ENCODE measurements at regions of chr3 and their contacts with region 1.

Region 1: GRCh38 chr3:122484985-122485384 is 29.8 kb downstream of the KPNA1 start:
- DNase-seq: peak; percentile 43 to 46
- H3K4me3 ChIP-seq: no peak overlapping the region
- H3K27ac ChIP-seq: peak overlapping the region; percentile 37
- H3K4me1 ChIP-seq: peaks cover 25% of the 10 kb centered on the region
- H3K27me3 ChIP-seq: no peaks in the 10 kb centered on the region
- CTCF ChIP-seq: no peak

Region 2: GRCh38 chr3:122497425-122497824 is 12.4 kb after region 1 on chr3:
- CTCF ChIA-PET with region 1: no interaction called
- POLR2A ChIA-PET with region 1: no interaction called
- intact Hi-C with region 1: loop called (anchors 1 kb)
- DNase-seq: peak; percentile 25 to 79
- H3K4me3 ChIP-seq: no peak overlapping the region
- H3K27ac ChIP-seq: peak overlapping the region; percentile 75
- H3K4me1 ChIP-seq: peaks cover 25% of the 10 kb centered on the region
- H3K27me3 ChIP-seq: no peaks in the 10 kb centered on the region
- CTCF ChIP-seq: no peak

Region 3: DNA sequence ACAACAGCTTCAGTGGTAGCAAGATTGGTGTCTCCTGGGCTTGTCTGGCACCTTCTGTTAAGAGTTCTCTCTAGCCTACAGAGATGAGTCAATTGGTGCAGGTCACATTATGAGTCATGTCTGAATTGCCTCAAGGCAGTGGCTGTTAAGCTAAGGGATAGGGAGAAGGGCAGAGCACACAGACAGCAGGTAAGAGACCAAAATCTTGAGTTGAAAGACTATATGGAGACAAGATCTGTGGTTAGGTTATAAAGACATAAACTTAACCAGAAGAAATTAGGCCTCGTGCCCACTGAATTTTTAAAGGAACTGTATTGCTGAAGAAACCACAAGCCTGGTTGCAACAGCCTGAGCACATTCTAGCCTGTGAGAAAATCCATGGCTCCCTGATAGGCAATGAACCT is 48.9 kb after region 1 on chr3:
- CTCF ChIA-PET with region 1: no interaction called
- POLR2A ChIA-PET with region 1: no interaction called
- intact Hi-C with region 1: loop called (anchors 1 kb)
- DNase-seq: peak; percentile 81 to 98
- H3K4me3 ChIP-seq: peak overlapping the region; percentile 3; the same call in 1 of the 2 replicates
- H3K27ac ChIP-seq: peak overlapping the region; percentile 97
- H3K4me1 ChIP-seq: peaks cover 27% of the 10 kb centered on the region
- H3K27me3 ChIP-seq: no peaks in the 10 kb centered on the region
- CTCF ChIP-seq: no peak

Measured in PC-9 (cell line).